H1 (cell line): ENCODE measurements at regions of chr10 and their contacts with region 1.

Region 1: GRCh38 chr10:109978481-109978880 is 29.3 kb upstream of the ADD3 start:
- DNase-seq: peak in 1 of 2 experiments; percentile 88
- H3K4me3 ChIP-seq: no peak overlapping the region
- H3K27ac ChIP-seq: no peak overlapping the region
- H3K4me1 ChIP-seq: no peaks in the 10 kb centered on the region
- H3K27me3 ChIP-seq: no peaks in the 10 kb centered on the region
- CTCF ChIP-seq: peak in 2 of 3 experiments; percentile 73 to 85; a peak in 3 of 4 replicates
- EP300 ChIP-seq: no peak
- POLR2A ChIP-seq: no peak
- RAD21 ChIP-seq: peak; percentile 68 to 79

Region 2: DNA sequence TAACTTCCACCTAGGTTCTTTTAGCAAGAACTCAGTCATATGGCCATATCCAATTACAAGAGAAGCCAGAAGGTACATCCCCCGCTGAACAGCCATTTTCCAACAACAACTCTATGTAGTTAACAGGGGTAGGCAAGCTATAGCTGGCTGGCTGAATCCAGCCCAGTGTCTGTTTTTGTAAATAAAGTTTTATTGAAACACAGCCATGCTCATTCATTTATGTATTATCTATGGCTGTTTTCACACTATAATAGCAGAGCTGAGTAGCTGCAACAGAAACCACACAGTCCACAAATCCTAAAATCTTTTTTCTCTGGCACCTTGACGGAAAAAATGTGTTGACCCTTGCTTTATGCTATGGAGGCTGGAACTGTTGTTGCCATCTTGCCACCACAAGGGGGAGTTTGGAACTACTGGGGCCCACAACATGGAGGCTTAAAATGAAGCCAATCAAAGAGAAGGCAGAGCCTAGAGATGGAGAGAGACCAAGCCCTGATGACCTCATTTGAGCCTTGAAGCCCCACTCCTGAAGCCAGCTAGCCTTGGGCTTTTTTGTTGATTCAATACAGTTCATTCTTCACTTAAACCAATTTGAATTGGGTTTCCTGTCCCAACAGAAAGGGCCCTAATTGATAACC is 21.9 kb before region 1 on chr10:
- CTCF ChIA-PET with region 1: interaction called, 33 read pairs
- POLR2A ChIA-PET with region 1: interaction called, 4 read pairs
- DNase-seq: no peak
- H3K4me3 ChIP-seq: no peak overlapping the region
- H3K27ac ChIP-seq: no peak overlapping the region
- H3K4me1 ChIP-seq: peaks cover 0 to 4% (median 2%) of the 10 kb centered on the region in 4 experiments; a peak in 6 of 7 replicates
- H3K27me3 ChIP-seq: no peaks in the 10 kb centered on the region
- CTCF ChIP-seq: peak; percentile 69 to 88 (median 74)
- EP300 ChIP-seq: no peak
- POLR2A ChIP-seq: no peak
- RAD21 ChIP-seq: peak; percentile 54 to 73

Region 3: GRCh38 chr10:109998513-109998912 is 20.0 kb after region 1 on chr10:
- CTCF ChIA-PET with region 1: interaction called, 90 read pairs
- POLR2A ChIA-PET with region 1: interaction called, 4 read pairs
- DNase-seq: no peak
- H3K4me3 ChIP-seq: no peak overlapping the region
- H3K27ac ChIP-seq: no peak overlapping the region
- H3K4me1 ChIP-seq: peaks cover under 1 to 10% (median 4%) of the 10 kb centered on the region in 4 experiments; a peak in 4 of 7 replicates
- H3K27me3 ChIP-seq: no peaks in the 10 kb centered on the region
- CTCF ChIP-seq: no peak
- EP300 ChIP-seq: no peak
- POLR2A ChIP-seq: no peak
- RAD21 ChIP-seq: no peak

Region 4: GRCh38 chr10:110016039-110016438 is 37.6 kb after region 1 on chr10:
- CTCF ChIA-PET with region 1: interaction called, 48 read pairs
- POLR2A ChIA-PET with region 1: no interaction called
- DNase-seq: no peak
- H3K4me3 ChIP-seq: no peak overlapping the region
- H3K27ac ChIP-seq: no peak overlapping the region
- H3K4me1 ChIP-seq: peaks cover 0 to 15% (median 9%) of the 10 kb centered on the region in 4 experiments; a peak in 5 of 7 replicates
- H3K27me3 ChIP-seq: no peaks in the 10 kb centered on the region
- CTCF ChIP-seq: peak in 2 of 3 experiments; percentile 46 to 48; a peak in 3 of 4 replicates
- EP300 ChIP-seq: no peak
- POLR2A ChIP-seq: no peak
- RAD21 ChIP-seq: peak; percentile 61 to 71

Region 5: GRCh38 chr10:110107887-110108286 is 129.4 kb after region 1 on chr10:
- CTCF ChIA-PET with region 1: interaction called, 13 read pairs
- POLR2A ChIA-PET with region 1: no interaction called
- DNase-seq: no peak
- H3K4me3 ChIP-seq: no peak overlapping the region
- H3K27ac ChIP-seq: no peak overlapping the region
- H3K4me1 ChIP-seq: no peaks in the 10 kb centered on the region
- H3K27me3 ChIP-seq: no peaks in the 10 kb centered on the region
- CTCF ChIP-seq: no peak
- EP300 ChIP-seq: no peak
- POLR2A ChIP-seq: no peak
- RAD21 ChIP-seq: no peak